PC-3 (cell line): ENCODE measurements at regions of chr11 and their contacts with region 1.

Region 1: DNA sequence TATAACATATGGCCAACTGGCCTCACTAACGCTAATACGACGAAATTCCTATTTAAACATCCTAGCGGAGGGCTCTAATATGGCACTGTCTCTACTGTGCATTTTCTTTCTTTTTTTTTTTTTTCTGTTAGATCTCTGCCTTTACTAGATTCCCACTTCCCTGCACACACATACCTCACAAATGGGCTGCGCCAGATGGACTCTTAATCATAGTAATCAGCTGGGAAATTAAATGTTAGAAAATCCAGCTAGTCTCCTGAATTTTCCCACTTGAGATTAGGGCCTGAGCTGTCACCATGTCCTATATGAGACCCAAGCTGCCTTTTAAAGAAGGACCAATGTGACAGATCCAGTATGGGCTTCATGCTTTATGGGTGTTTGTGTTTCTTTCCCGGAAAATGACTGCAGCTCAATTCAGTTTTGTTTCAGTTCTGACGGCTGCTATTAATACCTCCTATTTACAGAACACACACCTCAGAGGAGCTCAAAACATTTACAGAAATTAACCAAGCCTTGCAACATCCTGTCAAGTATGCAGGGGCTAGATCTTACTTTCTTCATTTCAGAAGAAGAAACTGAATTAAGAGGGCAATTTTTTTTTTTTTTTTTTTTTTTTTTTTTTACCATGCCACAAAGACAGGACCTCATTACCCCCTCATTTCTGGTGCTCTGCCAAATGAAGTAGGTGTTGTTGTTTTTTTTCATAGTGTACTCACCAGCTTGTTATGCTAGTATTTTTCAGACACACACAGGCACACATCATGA is 49.8 kb upstream of the BLID start:
- DNase-seq: no peak
- ATAC-seq: no peak
- H3K4me3 ChIP-seq: peak overlapping the region; percentile 9; the same call in 1 of the 2 replicates
- H3K27ac ChIP-seq: peak overlapping the region; percentile 99
- H3K4me1 ChIP-seq: peaks cover 97% of the 10 kb centered on the region
- H3K27me3 ChIP-seq: no peaks in the 10 kb centered on the region
- CTCF ChIP-seq: no peak

Region 2: GRCh38 chr11:121841487-121842191 is 324.1 kb before region 1 on chr11:
- CTCF ChIA-PET with region 1: no interaction called
- POLR2A ChIA-PET with region 1: no interaction called
- intact Hi-C with region 1: no loop called
- DNase-seq: peak; percentile 47
- ATAC-seq: no peak
- H3K4me3 ChIP-seq: no peak overlapping the region
- H3K27ac ChIP-seq: no peak overlapping the region
- H3K4me1 ChIP-seq: no peaks in the 10 kb centered on the region
- H3K27me3 ChIP-seq: no peaks in the 10 kb centered on the region
- CTCF ChIP-seq: no peak

Region 3: DNA sequence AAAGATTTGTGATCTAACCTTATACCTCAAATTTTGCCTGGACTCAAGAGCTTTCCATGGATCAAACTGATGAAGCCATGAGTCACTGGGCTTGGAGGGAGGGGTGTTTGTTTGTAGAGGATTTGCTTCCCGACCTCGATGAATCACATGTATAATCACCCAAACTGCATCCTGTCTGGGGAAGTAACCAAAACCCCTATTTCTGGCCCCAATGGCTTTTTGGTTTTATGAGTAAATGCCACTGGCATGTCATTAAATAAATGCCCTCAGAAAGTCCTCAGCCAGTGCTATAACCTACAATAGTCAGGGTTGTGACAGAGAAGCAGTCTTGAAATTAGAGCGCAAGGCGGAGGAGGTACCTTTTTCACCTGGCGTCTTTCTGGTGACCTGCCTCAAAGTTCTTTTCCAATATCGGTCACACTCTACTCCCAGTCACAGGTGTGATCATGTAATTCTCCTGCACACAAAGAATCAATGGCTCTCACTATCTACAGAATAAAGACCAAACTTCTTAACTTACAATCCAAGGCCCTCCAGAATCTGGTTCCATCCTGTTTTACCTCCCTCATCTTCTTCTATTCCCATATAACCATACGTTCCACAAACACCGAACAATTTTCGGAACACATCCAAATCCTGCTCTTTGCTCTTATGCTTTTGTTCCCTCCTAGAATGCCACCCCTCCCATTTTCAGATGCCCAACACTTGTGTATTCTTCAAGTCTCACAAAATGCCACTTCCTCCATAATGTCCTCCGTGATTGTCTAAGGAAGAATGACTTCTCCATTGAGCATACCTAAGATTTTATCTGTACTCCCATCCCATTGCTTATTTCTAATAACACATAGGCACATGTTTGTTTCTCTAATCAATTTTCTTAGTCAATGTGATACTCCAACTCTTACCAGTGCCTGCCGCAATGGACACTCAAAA is 31.5 kb after region 1 on chr11:
- CTCF ChIA-PET with region 1: no interaction called
- POLR2A ChIA-PET with region 1: interaction called, 30 read pairs
- intact Hi-C with region 1: loop called (anchors 2 kb)
- DNase-seq: peak; percentile 100
- ATAC-seq: peak; percentile 75
- H3K4me3 ChIP-seq: peak overlapping the region; percentile 17
- H3K27ac ChIP-seq: peak overlapping the region; percentile 94
- H3K4me1 ChIP-seq: peaks cover 80% of the 10 kb centered on the region
- H3K27me3 ChIP-seq: no peaks in the 10 kb centered on the region
- CTCF ChIP-seq: no peak